PC-9 (cell line): ENCODE measurements at regions of chr13 and their contacts with region 1.

Region 1: DNA sequence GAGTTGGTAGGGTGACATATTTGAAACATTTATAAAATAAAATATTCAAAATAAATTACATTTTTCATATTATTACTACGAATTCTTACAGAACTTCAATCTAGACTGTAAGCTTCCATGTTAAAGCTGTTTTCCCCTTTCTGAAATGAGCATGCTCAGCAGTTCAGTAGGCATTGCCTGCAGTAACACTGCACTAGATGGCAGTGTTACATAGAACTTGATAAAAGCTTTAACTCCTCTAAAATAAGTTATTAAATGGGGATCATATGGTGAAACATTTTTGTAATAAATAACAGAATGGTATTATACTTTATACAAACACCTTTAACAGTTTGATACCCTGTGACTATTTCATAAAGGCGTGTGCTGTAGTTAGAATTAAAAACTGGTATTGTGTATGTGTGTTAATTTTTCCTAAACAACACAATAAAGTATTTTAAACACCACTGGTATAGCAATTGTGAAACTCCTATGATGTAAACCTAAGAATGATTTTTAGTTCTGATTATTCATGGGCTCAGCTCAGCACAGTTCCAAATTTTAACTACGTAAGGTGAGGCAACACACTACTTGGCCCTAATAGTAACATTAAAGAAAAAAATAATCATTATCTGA is 11.6 kb upstream of the GPR18 start:
- DNase-seq: no peak
- H3K4me3 ChIP-seq: no peak overlapping the region
- H3K27ac ChIP-seq: no peak overlapping the region
- H3K4me1 ChIP-seq: no peaks in the 10 kb centered on the region
- H3K27me3 ChIP-seq: no peaks in the 10 kb centered on the region
- CTCF ChIP-seq: peak; percentile 64

Region 2: GRCh38 chr13:98842864-98843481 is 426.8 kb before region 1 on chr13:
- CTCF ChIA-PET with region 1: no interaction called
- POLR2A ChIA-PET with region 1: no interaction called
- intact Hi-C with region 1: loop called (anchors 5 kb)
- DNase-seq: peak; percentile 59 to 62
- H3K4me3 ChIP-seq: no peak overlapping the region
- H3K27ac ChIP-seq: no peak overlapping the region
- H3K4me1 ChIP-seq: no peaks in the 10 kb centered on the region
- H3K27me3 ChIP-seq: no peaks in the 10 kb centered on the region
- CTCF ChIP-seq: peak; percentile 93

Region 3: GRCh38 chr13:99087096-99087953 is 182.4 kb before region 1 on chr13:
- CTCF ChIA-PET with region 1: no interaction called
- POLR2A ChIA-PET with region 1: no interaction called
- intact Hi-C with region 1: loop called (anchors 10 kb)
- DNase-seq: peak; percentile 85 to 92
- H3K4me3 ChIP-seq: peak overlapping the region; percentile 84
- H3K27ac ChIP-seq: peak overlapping the region; percentile 72
- H3K4me1 ChIP-seq: peaks cover 37% of the 10 kb centered on the region
- H3K27me3 ChIP-seq: no peaks in the 10 kb centered on the region
- CTCF ChIP-seq: no peak; the same call in 1 of the 2 replicates

Region 4: GRCh38 chr13:99289674-99290337 is 20.1 kb after region 1 on chr13:
- CTCF ChIA-PET with region 1: interaction called, 11 read pairs
- POLR2A ChIA-PET with region 1: interaction called, 3 read pairs
- intact Hi-C with region 1: no loop called
- DNase-seq: no peak
- H3K4me3 ChIP-seq: no peak overlapping the region
- H3K27ac ChIP-seq: no peak overlapping the region
- H3K4me1 ChIP-seq: 0 out of 2 replicates have a peak, but pooled peaks cover 6% of the 10 kb centered on the region
- H3K27me3 ChIP-seq: no peaks in the 10 kb centered on the region
- CTCF ChIP-seq: no peak